ENCODE measurements at regions of chr14 and their contacts with region 1.

Region 1: GRCh38 chr14:95644981-95645380 is 41.2 kb upstream of the TCL1B start:
- DNase-seq: no peak
- ATAC-seq: no peak
- H3K4me3 ChIP-seq: no peak overlapping the region
- H3K27ac ChIP-seq: no peak overlapping the region
- H3K4me1 ChIP-seq: no peaks in the 10 kb centered on the region
- H3K27me3 ChIP-seq: peaks cover 0 to 24% (median 5%) of the 10 kb centered on the region in 7 donors
- CTCF ChIP-seq: no peak

Region 2: GRCh38 chr14:96888158-96888557 is 1243.2 kb after region 1 on chr14:
- intact Hi-C with region 1: loop called in 1 of 10 experiments (anchors 5 kb)
- DNase-seq: no peak
- ATAC-seq: no peak
- H3K4me3 ChIP-seq: no peak overlapping the region
- H3K27ac ChIP-seq: no peak overlapping the region
- H3K4me1 ChIP-seq: no peaks in the 10 kb centered on the region
- H3K27me3 ChIP-seq: no peaks in the 10 kb centered on the region
- CTCF ChIP-seq: no peak

Measured in heart right ventricle (tissue), 16 donors.